BJ (cell line): ENCODE measurements at regions of chr2 and their contacts with region 1.

Region 1: DNA sequence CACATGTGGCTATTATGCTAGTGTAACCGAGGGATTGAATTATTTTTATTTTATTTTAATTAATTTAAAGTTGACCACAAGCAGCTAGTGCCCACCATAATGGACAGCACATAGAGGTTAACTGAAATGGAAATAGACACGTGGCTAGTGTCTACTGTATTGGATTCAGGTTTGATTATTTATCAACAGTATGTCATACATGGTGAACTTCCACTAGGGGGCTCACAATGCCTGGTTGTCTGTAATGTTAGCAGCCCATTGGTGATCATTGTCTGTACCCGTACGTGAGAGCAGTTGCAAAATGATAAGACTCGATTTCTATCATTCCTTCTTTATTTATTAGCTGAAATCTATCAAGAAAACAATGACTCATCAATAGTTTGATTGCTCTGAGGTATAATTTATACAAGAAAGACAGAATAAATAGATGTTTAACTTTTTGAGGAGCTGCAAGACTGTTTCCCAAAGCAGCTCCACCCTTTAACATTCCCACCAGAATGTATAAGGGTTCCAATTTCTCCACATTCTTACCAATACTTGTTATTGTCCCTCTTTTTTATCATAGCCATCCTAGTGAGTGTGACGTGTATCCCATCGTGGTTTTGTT is 76.5 kb downstream of the CYBRD1 start:
- DNase-seq: no peak
- H3K4me3 ChIP-seq: no peak overlapping the region
- H3K27me3 ChIP-seq: peaks cover 6% of the 10 kb centered on the region
- CTCF ChIP-seq: peak; percentile 80

Region 2: DNA sequence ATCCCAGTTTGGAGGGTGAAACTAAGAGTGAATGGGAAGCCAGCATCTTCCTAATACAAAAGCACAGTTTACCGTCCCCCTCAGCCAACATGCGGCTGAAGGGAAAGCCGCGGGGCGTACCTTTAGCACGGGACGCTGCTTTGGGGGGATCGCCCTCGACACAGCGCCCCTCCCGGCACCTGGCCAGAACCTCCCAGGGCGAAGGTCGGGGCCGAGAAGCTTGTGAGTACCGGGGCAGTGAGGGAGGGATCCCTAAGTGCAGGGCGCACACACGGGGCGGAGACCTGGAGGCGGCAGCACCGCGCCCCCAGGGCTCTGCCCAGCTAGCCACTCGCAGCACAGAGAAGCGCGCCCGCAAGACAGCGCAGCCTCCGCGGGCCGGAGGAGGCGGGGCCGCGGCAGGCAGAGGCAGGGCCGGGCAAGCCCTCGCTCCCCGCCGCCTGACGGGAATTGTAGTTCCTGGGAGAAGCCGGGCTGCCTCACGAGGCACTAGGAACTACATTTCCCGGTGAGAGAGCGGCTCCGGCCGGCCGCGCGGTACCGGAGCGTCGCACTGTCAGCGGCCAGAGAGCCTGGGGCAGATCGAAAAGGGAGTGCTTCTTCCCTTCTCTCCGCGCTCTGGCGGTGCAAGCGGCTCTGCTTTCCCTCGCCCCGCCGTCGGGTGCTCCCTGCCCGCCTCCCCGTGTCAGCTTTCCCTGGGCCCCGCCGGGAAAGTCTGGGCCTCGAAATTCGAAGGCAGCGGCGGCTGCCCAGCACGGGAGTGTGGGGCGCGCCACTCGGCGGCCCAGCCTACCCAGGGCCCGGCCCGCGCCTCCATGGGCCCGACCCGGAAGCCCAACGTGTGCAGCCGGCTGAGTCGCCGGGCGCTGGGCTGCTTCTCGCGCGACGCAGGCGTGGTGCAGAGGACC is 164.8 kb before region 1 on chr2 and contains the starts of genes DCAF17 and METTL8:
- CTCF ChIA-PET with region 1: no interaction called
- POLR2A ChIA-PET with region 1: no interaction called
- DNase-seq: peak; percentile 78
- H3K4me3 ChIP-seq: peak within 1 kb of the TSS; percentile 58
- H3K27me3 ChIP-seq: no peaks in the 10 kb centered on the region
- CTCF ChIP-seq: peak; percentile 34; the same call in 1 of the 2 replicates
- polyA plus RNA-seq, gene DCAF17: 7.5 and 14.7 TPM in 2 replicates
- polyA plus RNA-seq, gene METTL8: 5.4 and 16.2 TPM in 2 replicates

Region 3: GRCh38 chr2:171587567-171587966 is 11.2 kb before region 1 on chr2:
- CTCF ChIA-PET with region 1: interaction called, 20 read pairs
- POLR2A ChIA-PET with region 1: interaction called, 3 read pairs
- DNase-seq: no peak
- H3K4me3 ChIP-seq: no peak overlapping the region
- H3K27me3 ChIP-seq: 0 out of 2 replicates have a peak, but pooled peaks cover 4% of the 10 kb centered on the region
- CTCF ChIP-seq: no peak

Region 4: GRCh38 chr2:171615069-171615468 is 16.3 kb after region 1 on chr2:
- CTCF ChIA-PET with region 1: interaction called, 62 read pairs
- POLR2A ChIA-PET with region 1: no interaction called
- DNase-seq: no peak
- H3K4me3 ChIP-seq: no peak overlapping the region
- H3K27me3 ChIP-seq: peaks cover 6% of the 10 kb centered on the region; the same call in 1 of the 2 replicates
- CTCF ChIP-seq: no peak